ENCODE measurements at regions of chr9 and their contacts with region 1.

Region 1: DNA sequence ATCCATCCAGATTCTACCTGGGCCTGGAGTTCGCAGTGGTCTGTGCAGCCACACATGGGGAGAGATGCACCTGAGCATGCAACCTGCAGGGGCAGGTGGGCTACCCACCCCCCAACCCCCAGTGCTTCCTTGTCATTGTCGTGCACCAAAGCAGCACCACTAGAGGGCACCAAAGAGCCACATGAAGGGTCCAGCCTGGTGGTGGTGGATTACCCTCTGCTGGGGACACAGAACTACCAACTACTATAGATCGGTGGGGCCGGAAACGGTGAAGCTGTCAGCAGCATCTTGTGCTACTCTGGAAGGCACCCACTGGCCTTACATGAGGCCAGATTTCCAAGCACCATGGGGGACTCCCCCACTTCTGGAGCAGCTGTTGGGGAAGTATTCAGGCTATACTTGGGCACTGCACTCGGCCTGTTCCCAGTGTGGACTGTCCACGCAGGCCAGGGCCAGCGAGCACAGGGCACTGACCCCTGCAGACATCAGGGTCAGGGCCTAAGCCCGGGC is 60.2 kb upstream of the TBC1D2 start:
- DNase-seq: peak; percentile 89
- H3K4me3 Mint-ChIP-seq: no peak overlapping the region
- H3K27ac Mint-ChIP-seq: no peak overlapping the region
- H3K4me1 Mint-ChIP-seq: no peaks in the 10 kb centered on the region
- H3K27me3 Mint-ChIP-seq: no peaks in the 10 kb centered on the region

Region 2: DNA sequence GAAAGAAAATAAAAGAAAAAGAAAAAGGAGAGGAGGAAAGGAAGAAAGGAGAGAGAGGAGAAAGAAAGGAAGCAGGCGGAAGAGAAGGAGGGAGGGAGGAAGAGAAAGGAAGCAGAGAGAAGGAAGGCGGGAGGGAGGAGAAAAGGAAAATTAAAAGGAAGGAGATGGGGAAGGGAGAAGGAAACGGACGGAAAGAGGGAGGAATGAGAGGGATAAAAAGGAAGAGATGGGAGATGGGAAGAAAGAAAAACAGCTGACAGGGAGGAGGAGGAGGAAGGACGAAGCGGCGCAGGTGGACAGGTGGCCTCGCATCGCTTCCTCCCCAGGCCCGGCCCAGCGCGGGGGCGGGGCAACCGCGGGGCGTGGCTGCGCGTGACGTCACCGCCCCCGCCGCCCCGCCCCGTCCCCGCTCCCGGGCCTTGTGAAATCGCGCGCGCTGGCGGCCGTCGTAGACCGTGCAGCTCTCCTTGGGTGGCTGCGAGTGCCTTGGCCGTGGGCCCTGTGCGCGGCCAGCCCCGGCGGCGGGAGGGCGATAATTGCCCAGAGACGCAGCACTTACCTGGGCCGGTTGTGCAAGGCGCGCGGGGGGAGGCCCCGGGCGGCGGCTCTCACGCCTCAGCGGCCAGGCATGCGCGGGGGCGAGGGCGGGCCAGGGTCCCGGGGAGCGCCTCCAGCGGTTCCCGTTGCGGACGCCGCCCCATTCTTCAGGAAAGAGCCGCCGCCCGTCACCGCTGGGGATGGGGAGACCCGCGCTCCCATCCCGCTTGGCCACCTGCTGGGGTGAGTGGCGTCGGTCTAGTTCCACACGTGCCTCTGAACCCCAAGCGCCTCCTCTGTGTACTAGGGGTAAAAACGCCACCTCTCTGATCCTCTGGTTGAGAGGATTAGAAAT is 512.2 kb before region 1 on chr9:
- CTCF ChIA-PET with region 1: no interaction called
- intact Hi-C with region 1: no loop called
- DNase-seq: peak; percentile 72
- H3K4me3 Mint-ChIP-seq: peak overlapping the region; percentile 77
- H3K27ac Mint-ChIP-seq: no peak overlapping the region
- H3K4me1 Mint-ChIP-seq: peaks cover 8% of the 10 kb centered on the region
- H3K27me3 Mint-ChIP-seq: peaks cover 15% of the 10 kb centered on the region

Region 3: DNA sequence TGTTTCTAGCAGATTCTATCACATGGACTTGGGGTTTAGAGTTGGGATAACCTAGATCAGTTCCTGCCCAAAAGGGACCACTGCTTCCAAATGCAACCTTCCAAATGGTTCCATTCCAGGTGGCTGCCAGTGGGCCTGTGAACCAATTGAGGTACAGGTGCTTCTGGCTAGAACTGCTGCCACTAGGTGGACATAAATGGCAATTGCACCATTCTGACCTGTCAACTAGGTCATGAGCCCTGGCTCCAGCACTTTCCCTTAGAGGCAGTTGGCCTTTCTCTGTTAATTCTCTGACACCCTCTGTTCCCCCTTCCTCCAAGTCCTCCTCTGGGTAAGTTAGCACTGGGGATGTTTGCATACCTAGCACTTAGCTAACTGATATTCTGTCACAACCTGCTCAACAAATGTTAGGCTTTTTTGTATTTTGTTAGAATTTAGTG is 361.0 kb before region 1 on chr9:
- CTCF ChIA-PET with region 1: no interaction called
- intact Hi-C with region 1: no loop called
- DNase-seq: peak; percentile 75
- H3K4me3 Mint-ChIP-seq: no peak overlapping the region
- H3K27ac Mint-ChIP-seq: no peak overlapping the region
- H3K4me1 Mint-ChIP-seq: no peaks in the 10 kb centered on the region
- H3K27me3 Mint-ChIP-seq: no peaks in the 10 kb centered on the region

Region 4: GRCh38 chr9:98326459-98327248 is 11.0 kb after region 1 on chr9:
- CTCF ChIA-PET with region 1: interaction called, 10 read pairs
- intact Hi-C with region 1: no loop called
- DNase-seq: no peak
- H3K4me3 Mint-ChIP-seq: no peak overlapping the region
- H3K27ac Mint-ChIP-seq: no peak overlapping the region
- H3K4me1 Mint-ChIP-seq: no peaks in the 10 kb centered on the region
- H3K27me3 Mint-ChIP-seq: no peaks in the 10 kb centered on the region

Region 5: GRCh38 chr9:98707166-98708102 is 391.8 kb after region 1 on chr9:
- CTCF ChIA-PET with region 1: no interaction called
- intact Hi-C with region 1: loop called (anchors 1 kb)
- DNase-seq: peak; percentile 53
- H3K4me3 Mint-ChIP-seq: no peak overlapping the region
- H3K27ac Mint-ChIP-seq: no peak overlapping the region
- H3K4me1 Mint-ChIP-seq: peaks cover 3% of the 10 kb centered on the region
- H3K27me3 Mint-ChIP-seq: peaks cover 61% of the 10 kb centered on the region

Region 6: DNA sequence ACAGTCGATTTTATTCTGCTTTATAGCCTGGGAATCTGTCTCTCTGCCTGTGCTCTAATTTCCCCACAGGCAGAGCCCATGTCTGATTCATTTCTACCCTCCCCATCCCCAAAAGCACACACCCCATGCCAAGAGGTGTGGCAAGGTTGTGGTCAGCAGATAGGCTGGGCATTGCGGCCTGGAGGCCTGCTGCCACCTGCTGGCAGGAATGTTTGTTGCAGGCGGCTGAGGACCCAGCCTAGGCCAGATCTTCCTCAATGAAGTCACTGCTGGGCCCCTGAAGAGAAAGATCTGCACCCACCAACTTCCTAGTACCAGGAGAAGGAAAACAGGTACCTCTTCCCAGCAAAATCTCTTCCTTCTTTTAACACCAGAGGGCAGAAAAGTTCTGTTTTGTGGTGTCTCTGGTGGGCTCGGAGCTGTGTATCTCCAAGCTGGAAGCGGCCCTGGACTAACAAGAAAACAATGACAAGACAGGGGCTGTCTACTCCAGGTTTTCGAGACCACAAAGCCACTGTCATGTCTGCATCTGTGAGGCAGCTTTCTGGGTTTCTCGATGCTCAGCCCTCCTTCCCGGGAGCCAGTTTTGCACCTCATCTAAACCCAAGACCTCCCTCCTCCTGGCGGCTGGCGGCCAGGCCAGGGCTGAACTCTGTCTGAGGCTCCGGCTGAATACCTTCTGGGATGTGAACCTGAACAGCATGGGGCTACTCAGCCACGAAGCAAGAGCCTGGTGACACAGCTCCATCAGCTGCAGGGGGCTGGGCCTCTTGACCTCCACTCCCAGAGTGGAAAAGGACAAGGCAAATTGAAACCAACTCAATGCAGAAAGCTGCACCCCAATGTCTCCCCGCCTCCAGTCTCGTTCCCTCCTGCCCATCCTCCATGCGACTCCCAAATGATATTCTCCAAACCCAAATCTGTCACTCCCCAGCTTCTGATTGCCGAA is 475.8 kb after region 1 on chr9:
- CTCF ChIA-PET with region 1: interaction called, 7 read pairs
- intact Hi-C with region 1: loop called (anchors 1 kb)
- DNase-seq: peak; percentile 70
- H3K4me3 Mint-ChIP-seq: no peak overlapping the region
- H3K27ac Mint-ChIP-seq: no peak overlapping the region
- H3K4me1 Mint-ChIP-seq: peaks cover 30% of the 10 kb centered on the region
- H3K27me3 Mint-ChIP-seq: no peaks in the 10 kb centered on the region

Measured in activated naive CD4-positive, alpha-beta T cell treated with anti-CD3 and anti-CD28 coated beads for 36 hours (primary cell).